ENCODE measurements at regions of chr22 and their contacts with region 1.

Region 1: DNA sequence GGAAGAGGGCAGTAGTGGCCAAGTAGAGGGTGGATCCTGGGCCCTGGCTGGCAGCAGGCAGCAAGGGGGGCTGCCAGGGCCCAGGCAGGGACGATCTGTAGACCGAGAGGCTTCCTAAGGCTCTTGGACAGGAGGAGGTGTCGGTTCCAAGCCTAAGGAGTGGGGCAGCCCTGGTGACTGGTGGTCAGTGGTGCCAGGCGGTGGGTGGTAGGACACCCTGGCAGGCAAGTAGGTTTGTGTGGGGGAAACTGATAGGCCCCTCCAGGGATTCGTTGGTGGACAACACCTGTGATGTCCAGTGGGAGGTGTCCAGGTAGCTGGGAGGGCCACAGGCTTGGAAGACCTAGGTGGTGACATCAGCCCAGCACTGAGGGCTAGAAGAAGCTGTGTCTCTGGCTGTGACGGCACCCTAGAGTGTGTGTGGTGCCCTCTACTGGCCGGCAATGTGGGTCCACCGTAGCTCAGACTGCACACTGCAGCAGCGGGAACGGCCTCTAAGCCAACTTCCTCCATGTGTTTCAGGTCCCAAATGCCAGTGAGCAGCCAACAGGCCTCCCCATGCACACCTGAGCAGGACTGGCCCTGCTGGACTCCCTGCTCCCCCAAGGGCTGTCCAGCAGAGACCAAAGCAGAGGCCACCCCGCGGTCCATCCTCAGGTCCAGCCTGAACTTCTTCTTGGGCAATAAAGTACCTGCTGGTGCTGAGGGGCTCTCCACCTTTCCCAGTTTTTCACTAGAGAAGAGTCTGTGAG is 9.4 kb upstream of the SAMM50 start:
- DNase-seq: peak; percentile 92
- H3K4me3 Mint-ChIP-seq: no peak overlapping the region
- H3K27ac Mint-ChIP-seq: peak overlapping the region; percentile 16
- H3K4me1 Mint-ChIP-seq: no peaks in the 10 kb centered on the region
- H3K27me3 Mint-ChIP-seq: peaks cover 3% of the 10 kb centered on the region

Region 2: DNA sequence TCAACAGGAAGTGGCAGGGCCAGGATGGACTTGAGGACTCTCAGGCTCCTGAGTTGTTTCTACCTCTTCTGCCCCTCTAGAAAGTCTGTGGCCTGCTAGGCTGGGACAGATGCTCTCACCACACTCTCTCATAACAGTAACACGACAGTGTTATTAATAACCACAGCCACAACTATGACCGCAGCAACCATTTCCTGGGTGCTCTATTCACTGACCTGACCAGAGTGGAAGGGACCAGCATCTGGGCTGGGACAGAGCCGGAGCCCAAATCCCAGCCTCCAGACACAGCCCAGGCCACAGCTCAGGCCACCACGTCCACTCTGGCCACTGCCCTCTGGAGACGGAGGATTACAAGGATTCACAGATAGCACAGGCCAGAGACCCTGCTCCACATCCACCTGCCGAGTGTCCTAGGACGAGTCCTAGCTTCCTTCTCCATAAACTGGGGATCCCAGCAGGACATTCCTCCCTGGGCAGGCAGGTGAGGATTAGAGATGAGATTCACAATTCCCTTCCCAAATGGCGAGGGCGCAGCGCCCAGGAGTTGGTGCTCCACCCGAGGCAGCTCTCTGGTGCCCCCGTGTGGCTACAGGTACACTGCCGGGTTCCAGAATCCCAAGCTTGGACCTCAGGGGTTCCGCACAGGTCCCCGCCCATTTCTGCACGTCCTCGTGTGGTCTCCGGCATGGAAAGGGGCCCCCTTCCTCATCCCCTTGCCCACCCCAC is 61.0 kb before region 1 on chr22:
- intact Hi-C with region 1: loop called (anchors 1 kb)
- DNase-seq: peak; percentile 83
- H3K4me3 Mint-ChIP-seq: no peak overlapping the region
- H3K27ac Mint-ChIP-seq: peak overlapping the region; percentile 20
- H3K4me1 Mint-ChIP-seq: no peaks in the 10 kb centered on the region
- H3K27me3 Mint-ChIP-seq: peaks cover 8% of the 10 kb centered on the region

Region 3: GRCh38 chr22:43955883-43956782 is 10.3 kb after region 1 on chr22:
- intact Hi-C with region 1: no loop called
- DNase-seq: peak; percentile 72
- H3K4me3 Mint-ChIP-seq: peak overlapping the region; percentile 96
- H3K27ac Mint-ChIP-seq: peak overlapping the region; percentile 94
- H3K4me1 Mint-ChIP-seq: peaks cover 22% of the 10 kb centered on the region
- H3K27me3 Mint-ChIP-seq: no peaks in the 10 kb centered on the region